ENCODE measurements at regions of chr5 and their contacts with region 1.

Region 1: GRCh38 chr5:170434966-170435605 is 45.9 kb upstream of the KCNMB1 start:
- DNase-seq: peak; percentile 66 to 87 (median 84)
- ATAC-seq: peak; percentile 73 to 83
- H3K4me3 ChIP-seq: no peak overlapping the region
- H3K27ac ChIP-seq: no peak overlapping the region
- H3K4me1 ChIP-seq: no peaks in the 10 kb centered on the region
- H3K27me3 ChIP-seq: no peaks in the 10 kb centered on the region

Region 2: GRCh38 chr5:170571875-170572852 is 137.1 kb after region 1 on chr5:
- intact Hi-C with region 1: no loop called
- DNase-seq: no peak
- ATAC-seq: no peak
- H3K4me3 ChIP-seq: no peak overlapping the region
- H3K27ac ChIP-seq: no peak overlapping the region
- H3K4me1 ChIP-seq: no peaks in the 10 kb centered on the region
- H3K27me3 ChIP-seq: no peaks in the 10 kb centered on the region

Region 3: DNA sequence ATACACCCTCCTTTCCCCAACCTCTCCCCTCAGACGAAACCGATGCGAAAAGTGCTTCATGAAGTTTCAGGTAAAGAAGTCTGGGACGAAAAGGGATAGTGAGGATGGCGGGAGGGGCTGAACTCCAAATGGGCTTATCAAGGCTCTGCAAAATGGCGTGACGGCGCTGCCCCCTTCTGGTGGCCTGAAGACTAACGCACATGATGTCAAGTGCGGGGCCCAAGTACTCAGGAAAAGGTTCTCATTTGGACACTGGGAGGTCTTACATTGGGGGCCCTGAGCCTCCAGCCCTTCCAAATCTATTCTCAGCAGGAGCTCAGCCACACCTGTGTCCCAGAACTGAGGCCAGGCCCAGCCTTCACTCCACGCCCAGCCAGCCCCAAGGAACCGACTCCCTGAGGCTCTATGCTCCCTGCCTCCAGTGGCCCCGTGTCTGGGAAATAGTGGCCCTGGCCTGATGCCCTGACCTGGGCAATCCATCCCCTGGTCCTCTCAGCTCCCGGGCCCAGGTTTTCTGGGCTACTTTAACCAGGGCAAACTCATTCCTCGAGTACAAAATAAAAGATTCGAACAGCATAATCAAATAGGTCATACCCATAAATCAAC is 188.6 kb after region 1 on chr5:
- intact Hi-C with region 1: loop called in 1 of 4 experiments (anchors 2 kb)
- DNase-seq: peak in 2 of 3 donors; percentile 71 to 78
- ATAC-seq: peak; percentile 23 to 43
- H3K4me3 ChIP-seq: no peak overlapping the region
- H3K27ac ChIP-seq: no peak overlapping the region
- H3K4me1 ChIP-seq: no peaks in the 10 kb centered on the region
- H3K27me3 ChIP-seq: no peaks in the 10 kb centered on the region

Region 4: DNA sequence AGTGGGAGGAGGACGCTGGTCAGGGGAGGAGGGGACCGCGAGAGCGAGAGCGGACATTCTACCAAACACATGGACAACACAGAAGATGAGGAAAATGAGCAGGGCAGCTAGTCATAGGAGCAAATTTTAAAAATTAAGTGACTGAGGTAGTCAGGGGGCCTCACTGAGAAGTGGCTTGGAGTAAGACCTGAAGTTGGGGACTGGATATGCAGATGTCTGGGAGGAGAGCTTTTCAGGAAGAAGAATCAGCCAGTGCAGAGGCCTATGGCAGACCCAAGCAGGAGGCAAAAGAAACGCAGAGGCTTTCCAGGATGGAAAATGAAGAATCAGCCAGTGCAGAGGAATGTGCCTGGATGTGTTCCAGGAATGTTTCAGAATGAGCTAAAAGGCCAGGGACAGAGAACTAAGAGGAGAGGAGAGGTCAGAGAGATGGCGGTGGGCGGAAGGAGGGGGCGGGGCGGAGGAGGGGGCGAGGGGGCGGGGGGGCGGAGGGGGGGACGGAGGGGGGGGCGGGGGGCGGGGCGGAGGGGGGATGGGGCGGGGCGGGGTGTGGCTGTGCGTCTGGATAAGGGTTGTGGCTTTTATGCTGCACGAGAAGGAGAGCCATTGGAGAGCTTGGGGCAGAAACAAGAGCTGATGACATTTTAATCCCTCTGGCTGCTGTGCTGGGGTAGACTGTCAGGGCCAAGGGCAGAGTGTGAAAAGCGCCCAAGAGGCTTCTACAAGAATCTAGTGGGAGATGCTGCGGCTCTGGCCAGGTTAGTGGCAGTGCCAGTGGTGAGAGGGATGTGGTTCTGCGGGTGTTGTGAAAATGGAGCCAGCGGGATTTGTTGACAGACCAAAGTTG is 198.4 kb after region 1 on chr5:
- intact Hi-C with region 1: loop called (anchors 2 to 5 kb)
- DNase-seq: peak; percentile 42 to 72 (median 68)
- ATAC-seq: peak; percentile 76 to 87
- H3K4me3 ChIP-seq: peak overlapping the region; percentile 3
- H3K27ac ChIP-seq: peak overlapping the region; percentile 28
- H3K4me1 ChIP-seq: peaks cover 3% of the 10 kb centered on the region
- H3K27me3 ChIP-seq: no peaks in the 10 kb centered on the region

Measured in right cardiac atrium (tissue), 5 donors.